B cell (primary cell): ENCODE measurements at regions of chr3 and their contacts with region 1.

Region 1: DNA sequence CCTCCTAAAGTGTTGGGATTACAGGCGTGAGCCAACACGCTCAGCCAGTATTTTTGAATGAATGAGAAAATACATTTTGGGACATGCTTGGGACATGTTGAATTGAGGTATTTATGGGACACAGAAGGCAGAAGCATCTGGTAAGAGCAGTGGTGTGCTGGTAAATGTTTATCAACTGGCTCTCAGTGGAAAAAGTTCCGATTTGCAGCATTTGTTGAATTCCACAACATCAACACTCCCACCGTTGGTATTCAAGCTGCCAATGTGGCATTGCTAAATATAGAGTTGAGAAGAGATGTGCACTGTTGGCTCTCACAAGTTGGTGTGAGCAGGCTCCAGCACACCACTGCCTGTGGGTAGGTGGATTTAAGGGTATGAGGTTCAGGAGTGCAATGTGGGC is 35.8 kb upstream of the LRRFIP2 start:
- DNase-seq: no peak
- ATAC-seq: no peak
- H3K4me3 ChIP-seq: no peak overlapping the region
- H3K4me3 Mint-ChIP-seq: no peak overlapping the region
- H3K27ac ChIP-seq: no peak overlapping the region
- H3K27ac Mint-ChIP-seq: no peak overlapping the region
- H3K4me1 ChIP-seq: no peaks in the 10 kb centered on the region
- H3K4me1 Mint-ChIP-seq: no peaks in the 10 kb centered on the region
- H3K27me3 ChIP-seq: no peaks in the 10 kb centered on the region
- H3K27me3 Mint-ChIP-seq: no peaks in the 10 kb centered on the region
- CTCF ChIP-seq: no peak

Region 2: DNA sequence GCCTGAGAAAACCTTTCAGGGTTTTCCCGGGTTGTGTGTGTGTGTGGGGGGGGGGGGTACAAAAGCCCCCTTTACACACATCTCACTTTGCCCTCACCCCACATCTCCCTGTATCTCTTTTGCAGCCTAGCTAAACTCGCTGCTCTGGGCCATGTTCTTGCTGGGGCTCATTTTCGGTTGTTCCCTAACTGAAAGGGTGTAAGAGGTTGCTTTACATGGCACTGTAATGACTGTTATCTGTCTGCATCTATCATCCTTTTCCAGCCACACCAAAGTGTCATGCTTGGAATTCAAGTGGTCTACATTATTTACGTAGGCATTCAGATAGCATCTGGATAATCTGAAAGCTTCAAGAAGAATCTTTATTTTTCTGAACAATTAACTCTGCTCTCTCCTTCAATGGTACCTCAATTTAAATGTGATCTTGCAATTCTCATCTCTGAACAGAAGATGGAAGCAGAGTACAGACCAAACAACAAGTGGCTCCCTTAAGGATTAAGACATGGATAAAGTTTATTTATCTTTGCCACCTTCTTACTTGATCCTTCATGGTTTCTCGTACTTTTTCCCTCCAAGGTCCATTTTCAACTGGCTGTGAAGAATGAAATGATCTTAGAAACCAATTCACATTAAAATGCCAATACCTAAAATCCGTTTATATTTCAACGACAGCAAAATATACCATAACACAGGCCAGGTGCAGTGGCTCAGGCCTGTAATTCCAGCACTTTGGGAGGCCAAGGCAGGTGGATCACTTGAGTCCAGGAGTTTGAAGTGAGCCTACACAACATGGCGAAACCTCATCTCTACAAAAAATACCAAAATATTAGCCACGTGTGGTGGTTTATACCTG is 480.8 kb before region 1 on chr3:
- CTCF ChIA-PET with region 1: interaction called, 12 read pairs
- POLR2A ChIA-PET with region 1: no interaction called
- intact Hi-C with region 1: no loop called
- DNase-seq: peak; percentile 51
- ATAC-seq: peak; percentile 45
- H3K4me3 ChIP-seq: no peak overlapping the region
- H3K4me3 Mint-ChIP-seq: no peak overlapping the region
- H3K27ac ChIP-seq: no peak overlapping the region
- H3K27ac Mint-ChIP-seq: no peak overlapping the region
- H3K4me1 ChIP-seq: no peaks in the 10 kb centered on the region
- H3K4me1 Mint-ChIP-seq: no peaks in the 10 kb centered on the region
- H3K27me3 ChIP-seq: peaks cover 0 to 3% (median 0%) of the 10 kb centered on the region in 4 experiments
- H3K27me3 Mint-ChIP-seq: peaks cover 20% of the 10 kb centered on the region
- CTCF ChIP-seq: peak; percentile 75

Region 3: GRCh38 chr3:36734742-36735141 is 475.5 kb before region 1 on chr3:
- CTCF ChIA-PET with region 1: interaction called, 12 read pairs
- POLR2A ChIA-PET with region 1: no interaction called
- intact Hi-C with region 1: no loop called
- DNase-seq: no peak
- ATAC-seq: no peak
- H3K4me3 ChIP-seq: no peak overlapping the region
- H3K4me3 Mint-ChIP-seq: no peak overlapping the region
- H3K27ac ChIP-seq: no peak overlapping the region
- H3K27ac Mint-ChIP-seq: no peak overlapping the region
- H3K4me1 ChIP-seq: no peaks in the 10 kb centered on the region
- H3K4me1 Mint-ChIP-seq: no peaks in the 10 kb centered on the region
- H3K27me3 ChIP-seq: no peaks in the 10 kb centered on the region
- H3K27me3 Mint-ChIP-seq: peaks cover 9% of the 10 kb centered on the region
- CTCF ChIP-seq: no peak

Region 4: DNA sequence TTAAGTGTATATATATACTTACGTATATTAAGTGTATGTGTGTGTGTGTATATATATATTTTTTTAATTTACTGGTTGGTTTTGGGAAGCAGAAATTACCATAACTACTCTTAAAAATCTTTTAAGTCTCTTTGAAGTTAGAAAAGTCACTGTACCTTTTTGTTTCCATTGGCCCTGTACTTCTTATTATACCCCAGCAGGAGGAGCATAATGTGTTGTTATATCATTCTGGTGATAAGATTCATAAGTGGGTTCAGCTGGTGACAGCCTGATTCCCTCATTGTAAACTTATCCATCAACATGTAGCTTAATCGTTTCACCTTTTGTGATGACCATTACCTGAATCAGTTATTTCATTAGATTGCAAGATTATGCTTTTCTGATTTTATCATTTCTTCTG is 186.1 kb before region 1 on chr3:
- CTCF ChIA-PET with region 1: interaction called, 6 read pairs
- POLR2A ChIA-PET with region 1: no interaction called
- intact Hi-C with region 1: loop called (anchors 1 kb)
- DNase-seq: no peak
- ATAC-seq: no peak
- H3K4me3 ChIP-seq: no peak overlapping the region
- H3K4me3 Mint-ChIP-seq: no peak overlapping the region
- H3K27ac ChIP-seq: peak overlapping the region in 1 of 2 donors; percentile 21
- H3K27ac Mint-ChIP-seq: no peak overlapping the region
- H3K4me1 ChIP-seq: peaks cover 5 to 6% of the 10 kb centered on the region in 2 donors
- H3K4me1 Mint-ChIP-seq: peaks cover 10% of the 10 kb centered on the region
- H3K27me3 ChIP-seq: no peaks in the 10 kb centered on the region
- H3K27me3 Mint-ChIP-seq: no peaks in the 10 kb centered on the region
- CTCF ChIP-seq: peak; percentile 38

Region 5: GRCh38 chr3:37197810-37198371 is 12.3 kb before region 1 on chr3:
- CTCF ChIA-PET with region 1: no interaction called
- POLR2A ChIA-PET with region 1: no interaction called
- intact Hi-C with region 1: no loop called
- DNase-seq: no peak
- ATAC-seq: no peak
- H3K4me3 ChIP-seq: no peak overlapping the region
- H3K4me3 Mint-ChIP-seq: no peak overlapping the region
- H3K27ac ChIP-seq: no peak overlapping the region
- H3K27ac Mint-ChIP-seq: no peak overlapping the region
- H3K4me1 ChIP-seq: no peaks in the 10 kb centered on the region
- H3K4me1 Mint-ChIP-seq: no peaks in the 10 kb centered on the region
- H3K27me3 ChIP-seq: no peaks in the 10 kb centered on the region
- H3K27me3 Mint-ChIP-seq: peaks cover 4% of the 10 kb centered on the region
- CTCF ChIP-seq: no peak